ENCODE measurements at regions of chrX and their contacts with region 1.

Region 1: GRCh38 chrX:134460005-134460861 is at the start of gene HPRT1:
- DNase-seq: peak; percentile 57 to 91 (median 73)
- ATAC-seq: peak; percentile 98
- H3K4me3 ChIP-seq: peak within 1 kb of the TSS; percentile 64
- H3K4me3 Mint-ChIP-seq: peak within 1 kb of the TSS; percentile 97
- H3K27ac ChIP-seq: peak within 1 kb of the TSS in 1 of 2 donors; percentile 13
- H3K27ac Mint-ChIP-seq: peak within 1 kb of the TSS; percentile 75
- H3K4me1 ChIP-seq: peaks cover 14% of the 10 kb centered on the region
- H3K4me1 Mint-ChIP-seq: peaks cover 20% of the 10 kb centered on the region
- H3K27me3 ChIP-seq: no peaks in the 10 kb centered on the region
- H3K27me3 Mint-ChIP-seq: no peaks in the 10 kb centered on the region
- CTCF ChIP-seq: no peak
- total RNA-seq, gene HPRT1: 14.1 to 15.5 TPM

Region 2: DNA sequence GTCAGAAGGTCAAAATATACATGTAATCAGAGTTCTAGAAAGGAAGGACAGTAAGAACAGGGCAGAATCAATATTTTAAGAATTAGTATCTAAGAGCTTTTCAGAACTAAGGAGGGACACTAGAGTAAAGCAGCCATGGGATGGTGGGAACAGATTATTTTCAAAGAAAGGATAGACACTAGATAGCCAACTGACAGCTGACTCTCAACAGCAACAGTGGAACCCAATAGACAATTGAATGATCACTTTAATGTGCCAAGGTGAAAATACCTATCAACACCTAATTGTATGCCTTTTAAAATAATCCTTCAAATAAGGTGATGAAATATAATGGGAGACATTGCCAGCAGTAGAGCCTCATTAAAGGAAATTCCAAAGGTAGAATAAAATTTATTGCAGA is 249.8 kb before region 1 on chrX:
- CTCF ChIA-PET with region 1: no interaction called
- POLR2A ChIA-PET with region 1: no interaction called
- intact Hi-C with region 1: no loop called
- DNase-seq: no peak
- ATAC-seq: no peak
- H3K4me3 ChIP-seq: no peak overlapping the region
- H3K4me3 Mint-ChIP-seq: no peak overlapping the region
- H3K27ac ChIP-seq: no peak overlapping the region
- H3K27ac Mint-ChIP-seq: no peak overlapping the region
- H3K4me1 ChIP-seq: no peaks in the 10 kb centered on the region
- H3K4me1 Mint-ChIP-seq: no peaks in the 10 kb centered on the region
- H3K27me3 ChIP-seq: no peaks in the 10 kb centered on the region
- H3K27me3 Mint-ChIP-seq: no peaks in the 10 kb centered on the region
- CTCF ChIP-seq: no peak

Region 3: DNA sequence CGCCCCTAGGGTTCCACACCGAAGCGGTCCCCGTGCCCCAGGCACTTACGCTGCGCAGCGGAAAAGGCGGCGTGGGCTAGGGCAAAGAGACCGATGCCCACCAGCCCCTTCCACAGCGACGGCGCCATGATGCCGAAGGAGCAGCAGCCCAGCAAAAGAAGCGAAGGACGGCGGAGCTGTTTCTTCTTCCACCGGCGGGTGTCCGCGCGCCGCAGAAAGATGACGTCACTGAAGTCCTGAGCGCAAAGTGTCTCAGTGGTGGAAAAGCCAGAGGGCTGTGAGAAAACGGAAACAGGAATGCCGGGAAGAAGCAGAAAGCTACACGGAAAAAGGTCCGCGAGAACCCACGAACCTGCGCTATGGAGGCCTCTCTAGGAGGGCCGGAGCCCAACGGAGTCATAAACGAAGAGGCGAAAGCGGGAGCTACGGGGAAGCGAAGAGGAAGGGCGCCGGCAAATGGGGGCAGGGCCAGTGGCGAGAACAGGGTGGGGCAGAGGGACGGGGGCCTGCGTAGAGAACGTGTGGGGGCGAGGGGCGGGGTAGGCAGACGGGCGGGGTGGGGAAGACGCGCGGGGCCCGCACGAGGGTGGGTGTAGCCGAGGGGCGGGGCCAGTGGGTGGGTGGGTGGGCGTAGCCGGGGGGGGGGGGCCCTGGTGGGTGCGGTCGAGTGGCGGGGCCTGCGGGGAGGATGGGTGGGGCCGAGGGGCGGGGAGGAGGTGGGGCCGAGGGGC is 1513.5 kb after region 1 on chrX and contains the start of gene MMGT1:
- CTCF ChIA-PET with region 1: no interaction called
- POLR2A ChIA-PET with region 1: no interaction called
- intact Hi-C with region 1: loop called in 1 of 2 experiments (anchors 5 kb)
- DNase-seq: peak; percentile 63 to 92 (median 76)
- ATAC-seq: peak; percentile 84
- H3K4me3 ChIP-seq: peak within 1 kb of the TSS; percentile 92
- H3K4me3 Mint-ChIP-seq: peak within 1 kb of the TSS; percentile 95
- H3K27ac ChIP-seq: peak within 1 kb of the TSS; percentile 79 to 89
- H3K27ac Mint-ChIP-seq: peak within 1 kb of the TSS; percentile 97
- H3K4me1 ChIP-seq: peaks cover 13% of the 10 kb centered on the region
- H3K4me1 Mint-ChIP-seq: peaks cover 48% of the 10 kb centered on the region
- H3K27me3 ChIP-seq: no peaks in the 10 kb centered on the region
- H3K27me3 Mint-ChIP-seq: no peaks in the 10 kb centered on the region
- CTCF ChIP-seq: no peak
- total RNA-seq, gene MMGT1: 36.4 to 37.0 TPM

Measured in CD4-positive, alpha-beta T cell (primary cell).